ENCODE measurements at regions of chr14 and their contacts with region 1.

Region 1: DNA sequence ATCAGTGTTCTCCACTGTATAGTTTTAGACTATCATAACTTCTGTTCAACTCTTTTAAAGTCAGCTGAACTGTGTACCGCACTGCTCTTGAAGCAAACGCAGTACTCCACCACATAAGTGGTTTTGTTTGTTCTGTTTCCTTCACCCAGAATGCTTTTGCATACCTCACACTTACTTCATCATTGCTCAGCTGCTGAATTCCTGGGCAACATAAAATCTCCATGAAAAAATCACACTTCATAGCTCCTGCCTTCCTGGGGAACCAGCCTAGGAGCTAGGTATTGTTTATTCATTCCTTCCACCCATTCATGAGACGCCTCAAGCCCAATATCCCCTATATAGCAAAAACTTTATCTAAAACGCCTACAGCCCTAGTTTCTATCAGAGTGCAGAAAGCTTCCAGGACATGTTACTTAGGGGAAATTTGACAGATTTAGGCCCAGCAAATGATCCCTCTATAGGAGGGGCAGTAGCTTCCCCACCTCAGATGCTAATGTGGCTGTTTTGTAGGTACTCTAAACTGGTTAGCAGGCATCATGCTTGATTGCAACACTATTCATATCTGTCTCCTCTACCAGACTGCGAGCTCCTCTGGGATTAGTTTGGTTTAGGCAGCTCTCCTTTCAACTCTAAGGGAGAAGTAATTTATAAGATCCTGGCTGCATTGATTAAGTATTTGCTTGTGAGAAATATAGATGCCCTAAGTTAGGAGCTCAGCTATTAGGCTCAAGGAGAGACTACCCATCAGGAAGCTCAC is 44.5 kb downstream of the LRRC9 start:
- DNase-seq: peak; percentile 31
- ATAC-seq: peak; percentile 69
- H3K4me3 ChIP-seq: no peak overlapping the region
- H3K27ac ChIP-seq: no peak overlapping the region
- H3K4me1 ChIP-seq: no peaks in the 10 kb centered on the region
- H3K27me3 ChIP-seq: no peaks in the 10 kb centered on the region
- CTCF ChIP-seq: no peak
- POLR2A ChIP-seq: no peak
- RAD21 ChIP-seq: no peak

Region 2: GRCh38 chr14:60164712-60165546 is 200.5 kb after region 1 on chr14 and contains the start of gene DHRS7:
- CTCF ChIA-PET with region 1: no interaction called
- POLR2A ChIA-PET with region 1: no interaction called
- dilution Hi-C with region 1: no loop called
- in situ Hi-C with region 1: no loop called
- intact Hi-C with region 1: loop called (anchors 1 kb)
- DNase-seq: peak; percentile 71
- ATAC-seq: peak; percentile 99
- H3K4me3 ChIP-seq: peak within 1 kb of the TSS; percentile 98
- H3K27ac ChIP-seq: peak within 1 kb of the TSS; percentile 82
- H3K4me1 ChIP-seq: peaks cover 6% of the 10 kb centered on the region
- H3K27me3 ChIP-seq: no peaks in the 10 kb centered on the region
- CTCF ChIP-seq: peak; percentile 49
- POLR2A ChIP-seq: peak; percentile 69
- RAD21 ChIP-seq: peak; percentile 52
- total RNA-seq, gene DHRS7: 50.2 and 56.7 TPM in 2 replicates